Activated CD4-positive, alpha-beta T cell treated with anti-CD3 and anti-CD28 coated beads, Interleukin-2, amount 10 ng/mL, durations not matched to agents 24 days and 14 days (primary cell): ENCODE measurements at regions of chr17 and their contacts with region 1.

Region 1: GRCh38 chr17:80761110-80761871 is 216.7 kb downstream of the RPTOR start:
- DNase-seq: peak; percentile 91
- H3K4me3 Mint-ChIP-seq: peak overlapping the region; percentile 76
- H3K27ac Mint-ChIP-seq: peak overlapping the region; percentile 99
- H3K4me1 Mint-ChIP-seq: peaks cover 75% of the 10 kb centered on the region
- H3K27me3 Mint-ChIP-seq: no peaks in the 10 kb centered on the region

Region 2: GRCh38 chr17:80605326-80606066 is 155.8 kb before region 1 on chr17:
- intact Hi-C with region 1: loop called (anchors 1 kb)
- DNase-seq: peak; percentile 74
- H3K4me3 Mint-ChIP-seq: peak overlapping the region; percentile 17
- H3K27ac Mint-ChIP-seq: peak overlapping the region; percentile 86
- H3K4me1 Mint-ChIP-seq: peaks cover 56% of the 10 kb centered on the region
- H3K27me3 Mint-ChIP-seq: no peaks in the 10 kb centered on the region

Region 3: GRCh38 chr17:80716986-80717719 is 44.1 kb before region 1 on chr17:
- intact Hi-C with region 1: no loop called
- DNase-seq: no peak
- H3K4me3 Mint-ChIP-seq: no peak overlapping the region
- H3K27ac Mint-ChIP-seq: no peak overlapping the region
- H3K4me1 Mint-ChIP-seq: peaks cover 57% of the 10 kb centered on the region
- H3K27me3 Mint-ChIP-seq: no peaks in the 10 kb centered on the region

Region 4: GRCh38 chr17:80774643-80775281 is 13.5 kb after region 1 on chr17:
- intact Hi-C with region 1: loop called (anchors 1 kb)
- DNase-seq: peak; percentile 79
- H3K4me3 Mint-ChIP-seq: peak overlapping the region; percentile 83
- H3K27ac Mint-ChIP-seq: peak overlapping the region; percentile 98
- H3K4me1 Mint-ChIP-seq: peaks cover 76% of the 10 kb centered on the region
- H3K27me3 Mint-ChIP-seq: no peaks in the 10 kb centered on the region

Region 5: GRCh38 chr17:80780381-80781198 is 19.3 kb after region 1 on chr17:
- intact Hi-C with region 1: loop called (anchors 2 kb)
- DNase-seq: peak; percentile 83
- H3K4me3 Mint-ChIP-seq: peak overlapping the region; percentile 82
- H3K27ac Mint-ChIP-seq: peak overlapping the region; percentile 92
- H3K4me1 Mint-ChIP-seq: peaks cover 79% of the 10 kb centered on the region
- H3K27me3 Mint-ChIP-seq: no peaks in the 10 kb centered on the region

Region 6: GRCh38 chr17:80855948-80856862 is 94.9 kb after region 1 on chr17:
- intact Hi-C with region 1: loop called (anchors 1 kb)
- DNase-seq: peak; percentile 95
- H3K4me3 Mint-ChIP-seq: peak overlapping the region; percentile 62
- H3K27ac Mint-ChIP-seq: peak overlapping the region; percentile 91
- H3K4me1 Mint-ChIP-seq: peaks cover 73% of the 10 kb centered on the region
- H3K27me3 Mint-ChIP-seq: no peaks in the 10 kb centered on the region

Region 7: DNA sequence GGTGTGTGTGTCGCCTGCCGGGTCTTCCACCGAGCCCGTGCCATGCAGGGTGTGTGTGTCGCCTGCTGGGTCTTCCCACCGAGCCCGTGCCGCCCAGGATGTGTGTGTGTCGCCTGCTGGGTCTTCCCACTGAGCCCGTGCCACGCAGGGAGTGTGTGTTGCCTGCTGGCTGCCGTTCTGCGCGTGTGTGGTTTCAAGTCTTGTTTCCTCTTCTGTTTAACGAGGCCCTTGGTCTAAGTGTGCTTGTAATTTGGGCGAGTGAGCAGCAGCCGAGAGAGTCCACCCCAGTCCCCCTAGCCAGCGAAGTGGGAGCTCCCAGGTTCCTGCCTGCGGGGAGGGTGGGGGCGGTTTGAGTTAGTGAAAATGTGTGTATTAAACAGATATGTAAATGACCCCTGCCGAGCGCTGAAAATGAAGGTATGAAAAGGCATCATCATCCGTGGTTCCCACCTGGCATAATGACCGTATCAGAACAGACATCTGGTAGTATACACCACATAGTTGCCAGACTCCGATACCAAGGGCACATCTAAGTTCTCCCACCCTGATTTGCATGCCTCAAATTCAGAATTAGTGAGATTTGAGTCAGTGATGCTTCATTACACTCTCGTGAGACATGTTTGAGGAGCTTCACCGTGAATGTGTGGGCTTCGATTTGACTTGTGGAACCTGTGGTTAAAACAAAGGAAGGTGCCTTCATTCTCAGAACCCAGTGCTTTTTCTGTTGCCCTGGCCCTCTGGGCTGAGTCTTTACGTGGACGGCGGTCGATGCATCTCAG is 115.8 kb after region 1 on chr17:
- intact Hi-C with region 1: loop called (anchors 1 kb)
- DNase-seq: peak; percentile 89
- H3K4me3 Mint-ChIP-seq: peak overlapping the region; percentile 88
- H3K27ac Mint-ChIP-seq: peak overlapping the region; percentile 99
- H3K4me1 Mint-ChIP-seq: peaks cover 57% of the 10 kb centered on the region
- H3K27me3 Mint-ChIP-seq: no peaks in the 10 kb centered on the region